OCI-LY7 (cell line): ENCODE measurements at regions of chr4 and their contacts with region 1.

Region 1: DNA sequence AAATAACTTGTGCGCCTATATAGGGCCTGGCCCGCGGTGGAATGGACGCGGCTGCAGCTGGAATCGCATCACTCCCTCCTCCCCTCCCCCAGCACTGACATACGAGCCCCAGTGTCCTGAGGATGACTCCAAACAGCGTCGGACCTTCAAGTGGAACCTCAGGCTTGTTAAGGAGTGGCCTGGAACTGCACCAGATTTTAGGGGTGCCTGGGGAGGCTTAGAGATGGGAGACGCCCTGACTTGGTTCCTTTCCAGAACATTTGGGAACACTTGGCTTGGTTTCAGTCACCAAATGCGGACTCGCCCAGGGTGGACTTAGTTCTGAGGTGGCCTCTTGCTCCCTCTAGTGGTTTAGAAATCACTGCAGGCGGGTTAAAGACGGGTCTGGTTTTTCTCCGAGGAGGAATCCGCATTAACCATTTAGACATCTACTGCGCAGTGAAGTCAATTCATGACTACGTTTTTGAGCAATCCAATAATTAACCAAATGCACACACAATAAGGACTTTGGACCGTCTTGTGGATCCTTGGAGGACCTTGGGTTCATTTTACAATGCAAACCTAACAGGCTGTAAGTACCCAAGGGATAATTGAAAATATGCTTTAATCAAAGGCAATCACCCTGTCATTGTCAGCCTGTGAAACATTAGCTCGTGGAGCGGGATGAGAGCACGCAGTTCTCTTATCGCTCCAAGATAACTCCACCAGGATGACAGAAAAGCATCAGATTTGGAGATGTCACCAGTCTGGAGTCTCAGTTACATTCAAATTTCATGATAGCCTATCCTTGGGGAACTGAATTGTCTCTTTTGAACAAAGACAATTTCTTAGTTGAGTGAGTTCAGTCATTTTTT is 11.2 kb upstream of the PDGFRA start:
- DNase-seq: peak; percentile 75
- H3K4me3 ChIP-seq: peak overlapping the region; percentile 41
- H3K27ac ChIP-seq: no peak overlapping the region
- H3K4me1 ChIP-seq: peaks cover 3% of the 10 kb centered on the region
- CTCF ChIP-seq: peak; percentile 97

Region 2: DNA sequence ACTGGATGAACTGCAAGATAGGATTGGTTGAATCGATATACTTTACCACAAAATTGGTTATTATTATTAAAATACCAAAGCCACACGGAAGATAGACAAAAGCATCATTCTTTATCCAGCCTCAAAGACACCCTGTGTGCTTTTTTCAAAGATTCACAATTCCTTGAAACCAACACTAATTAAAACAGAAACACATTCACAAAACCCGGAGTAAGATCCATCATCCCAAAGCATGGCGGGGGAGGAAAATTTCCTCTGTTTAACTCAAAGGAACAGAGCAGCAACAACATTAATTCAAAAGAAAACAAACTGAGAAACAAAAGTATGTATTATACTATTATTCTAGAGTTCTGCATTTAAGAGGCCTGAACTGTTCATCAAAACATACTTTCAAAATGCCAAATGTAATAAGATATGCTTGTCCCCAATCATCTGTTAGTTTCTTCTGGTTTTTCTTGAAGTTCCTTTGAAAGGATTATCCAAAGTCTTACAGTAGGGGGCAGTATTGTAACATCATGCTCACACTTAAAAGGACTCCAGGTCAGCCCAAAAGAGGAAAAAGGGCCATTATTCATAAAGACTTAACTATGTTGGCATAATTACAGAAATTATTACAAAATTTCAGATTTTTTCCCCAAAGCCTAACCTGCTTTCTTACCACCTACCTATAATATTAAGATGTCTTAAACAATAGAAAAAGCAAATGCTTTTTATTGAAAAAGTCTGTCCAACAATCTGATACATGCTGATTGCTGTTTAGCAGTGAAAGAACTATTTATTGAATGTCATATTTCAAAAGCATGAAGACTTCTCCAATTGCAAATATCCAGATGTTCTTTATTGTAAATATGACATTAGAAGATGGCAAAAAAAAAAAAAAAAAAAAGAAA is 1020.7 kb before region 1 on chr4:
- CTCF ChIA-PET with region 1: no interaction called
- POLR2A ChIA-PET with region 1: no interaction called
- intact Hi-C with region 1: loop called (anchors 5 kb)
- DNase-seq: peak; percentile 80
- H3K4me3 ChIP-seq: no peak overlapping the region
- H3K27ac ChIP-seq: no peak overlapping the region
- H3K4me1 ChIP-seq: no peaks in the 10 kb centered on the region
- CTCF ChIP-seq: peak; percentile 95

Region 3: GRCh38 chr4:53908661-53909078 is 309.2 kb before region 1 on chr4:
- CTCF ChIA-PET with region 1: no interaction called
- POLR2A ChIA-PET with region 1: interaction called, 5 read pairs
- intact Hi-C with region 1: loop called (anchors 1 kb)
- DNase-seq: peak; percentile 72
- H3K4me3 ChIP-seq: no peak overlapping the region
- H3K27ac ChIP-seq: no peak overlapping the region
- H3K4me1 ChIP-seq: peaks cover 21% of the 10 kb centered on the region
- CTCF ChIP-seq: peak; percentile 91

Region 4: GRCh38 chr4:53929955-53930798 is 287.7 kb before region 1 on chr4:
- CTCF ChIA-PET with region 1: interaction called, 3 read pairs
- POLR2A ChIA-PET with region 1: interaction called, 19 read pairs
- intact Hi-C with region 1: loop called (anchors 1 kb)
- DNase-seq: peak; percentile 82
- H3K4me3 ChIP-seq: no peak overlapping the region
- H3K27ac ChIP-seq: no peak overlapping the region
- H3K4me1 ChIP-seq: peaks cover 32% of the 10 kb centered on the region
- CTCF ChIP-seq: peak; percentile 95

Region 5: GRCh38 chr4:54255876-54256275 is 38.0 kb after region 1 on chr4:
- CTCF ChIA-PET with region 1: no interaction called
- POLR2A ChIA-PET with region 1: no interaction called
- intact Hi-C with region 1: no loop called
- DNase-seq: no peak
- H3K4me3 ChIP-seq: no peak overlapping the region
- H3K27ac ChIP-seq: no peak overlapping the region
- H3K4me1 ChIP-seq: no peaks in the 10 kb centered on the region
- CTCF ChIP-seq: no peak

Region 6: GRCh38 chr4:54780149-54780495 is 562.3 kb after region 1 on chr4:
- CTCF ChIA-PET with region 1: no interaction called
- POLR2A ChIA-PET with region 1: no interaction called
- intact Hi-C with region 1: no loop called
- DNase-seq: no peak
- H3K4me3 ChIP-seq: no peak overlapping the region
- H3K27ac ChIP-seq: no peak overlapping the region
- H3K4me1 ChIP-seq: no peaks in the 10 kb centered on the region
- CTCF ChIP-seq: no peak